MCF 10A (cell line): ENCODE measurements at regions of chr1 and their contacts with region 1.

Region 1: GRCh38 chr1:228982616-228983015 is 247.3 kb downstream of the RHOU start:
- DNase-seq: peak; percentile 70
- H3K4me3 Mint-ChIP-seq: no peak overlapping the region
- H3K27ac Mint-ChIP-seq: no peak overlapping the region
- H3K4me1 Mint-ChIP-seq: peaks cover 6% of the 10 kb centered on the region
- H3K27me3 Mint-ChIP-seq: no peaks in the 10 kb centered on the region
- CTCF ChIP-seq: no peak

Region 2: GRCh38 chr1:228994676-228995594 is 12.3 kb after region 1 on chr1:
- CTCF ChIA-PET with region 1: interaction called, 5 read pairs
- POLR2A ChIA-PET with region 1: interaction called, 11 read pairs
- intact Hi-C with region 1: no loop called
- DNase-seq: no peak
- H3K4me3 Mint-ChIP-seq: no peak overlapping the region
- H3K27ac Mint-ChIP-seq: no peak overlapping the region
- H3K4me1 Mint-ChIP-seq: peaks cover 12% of the 10 kb centered on the region
- H3K27me3 Mint-ChIP-seq: no peaks in the 10 kb centered on the region
- CTCF ChIP-seq: no peak

Region 3: DNA sequence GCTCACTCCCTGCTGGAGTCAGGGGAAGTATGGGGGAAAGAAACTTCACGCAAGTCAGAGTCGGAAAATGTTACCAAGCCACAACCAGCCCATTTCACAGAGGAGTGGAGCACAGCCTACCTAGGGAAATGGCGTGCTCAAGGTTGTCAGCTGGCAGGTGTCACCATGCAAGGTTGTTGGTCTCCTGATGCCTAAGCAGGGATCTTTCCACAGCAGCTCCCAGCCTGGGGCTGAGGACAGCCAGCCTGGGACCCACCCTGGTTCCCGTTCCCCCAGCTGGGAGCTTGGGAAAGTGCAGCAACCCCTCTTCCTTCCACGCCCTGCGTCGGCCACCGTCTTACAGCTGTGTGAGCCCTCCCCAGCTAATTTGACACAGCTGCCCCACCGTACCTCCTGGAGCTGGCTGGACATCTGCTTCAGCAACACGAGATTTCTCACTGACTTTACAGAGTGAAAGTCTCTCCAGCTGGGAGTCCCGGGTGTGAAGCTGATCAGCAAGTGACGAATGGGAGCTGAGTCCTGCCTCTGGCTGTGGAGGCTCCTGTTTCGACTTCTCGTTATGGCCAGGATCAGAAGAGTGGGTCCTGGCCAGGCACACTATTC is 63.7 kb after region 1 on chr1:
- CTCF ChIA-PET with region 1: no interaction called
- POLR2A ChIA-PET with region 1: no interaction called
- intact Hi-C with region 1: no loop called
- DNase-seq: no peak
- H3K4me3 Mint-ChIP-seq: no peak overlapping the region
- H3K27ac Mint-ChIP-seq: no peak overlapping the region
- H3K4me1 Mint-ChIP-seq: no peaks in the 10 kb centered on the region
- H3K27me3 Mint-ChIP-seq: peaks cover 87% of the 10 kb centered on the region
- CTCF ChIP-seq: no peak

Region 4: DNA sequence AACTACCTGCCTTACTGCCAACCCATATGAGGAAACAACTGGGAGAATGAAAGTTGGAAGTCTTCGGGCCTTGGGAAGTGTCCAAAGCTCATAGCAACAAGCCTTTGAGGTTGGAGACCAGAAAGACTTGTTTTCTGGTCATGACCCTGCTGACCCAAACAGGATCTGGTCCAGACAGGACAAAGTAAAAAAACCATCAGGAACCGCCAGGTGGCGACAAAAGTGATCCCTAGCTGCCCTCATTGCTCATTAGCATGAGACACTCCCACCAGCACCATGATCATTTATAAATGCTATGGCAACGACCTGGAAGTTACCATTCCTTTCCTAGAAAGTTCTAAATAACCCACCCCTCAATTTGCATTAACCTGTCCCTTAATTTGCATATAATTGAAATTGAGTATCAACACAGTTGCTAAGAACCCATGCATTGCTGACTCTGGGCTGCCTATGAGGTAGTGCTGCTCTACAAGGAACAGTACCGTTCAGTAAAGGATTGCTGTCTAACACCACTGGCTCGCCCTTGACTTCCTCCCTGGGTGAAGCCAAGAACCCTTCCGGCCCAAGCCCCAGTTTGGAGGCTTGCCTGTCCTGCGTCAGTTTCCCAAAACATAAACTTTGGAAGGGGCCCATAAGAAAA is 732.5 kb after region 1 on chr1:
- CTCF ChIA-PET with region 1: no interaction called
- POLR2A ChIA-PET with region 1: no interaction called
- intact Hi-C with region 1: no loop called
- DNase-seq: peak; percentile 83
- H3K4me3 Mint-ChIP-seq: no peak overlapping the region
- H3K27ac Mint-ChIP-seq: peak overlapping the region; percentile 17
- H3K4me1 Mint-ChIP-seq: no peaks in the 10 kb centered on the region
- H3K27me3 Mint-ChIP-seq: no peaks in the 10 kb centered on the region
- CTCF ChIP-seq: peak; percentile 88